Activated T-helper 2 cell treated with anti-CD3 and anti-CD28 coated beads, Interferon-gamma antibody, Interleukin-2, Interleukin-4, amounts not matched to agents 10 μg/mL and 5 μg/mL and 100 μg/mL, durations not matched to agents 14 hours and 24 hours and 36 hours (primary cell): ENCODE measurements at regions of chr7 and their contacts with region 1.

Region 1: GRCh38 chr7:140479062-140479738 is at the start of gene MKRN1:
- DNase-seq: peak; percentile 89
- H3K4me3 Mint-ChIP-seq: peak within 1 kb of the TSS; percentile 97
- H3K27ac Mint-ChIP-seq: peak within 1 kb of the TSS; percentile 96
- H3K4me1 Mint-ChIP-seq: peaks cover 25% of the 10 kb centered on the region
- H3K27me3 Mint-ChIP-seq: no peaks in the 10 kb centered on the region
- total RNA-seq, gene MKRN1: 72.9 and 73.6 TPM in 2 replicates

Region 2: DNA sequence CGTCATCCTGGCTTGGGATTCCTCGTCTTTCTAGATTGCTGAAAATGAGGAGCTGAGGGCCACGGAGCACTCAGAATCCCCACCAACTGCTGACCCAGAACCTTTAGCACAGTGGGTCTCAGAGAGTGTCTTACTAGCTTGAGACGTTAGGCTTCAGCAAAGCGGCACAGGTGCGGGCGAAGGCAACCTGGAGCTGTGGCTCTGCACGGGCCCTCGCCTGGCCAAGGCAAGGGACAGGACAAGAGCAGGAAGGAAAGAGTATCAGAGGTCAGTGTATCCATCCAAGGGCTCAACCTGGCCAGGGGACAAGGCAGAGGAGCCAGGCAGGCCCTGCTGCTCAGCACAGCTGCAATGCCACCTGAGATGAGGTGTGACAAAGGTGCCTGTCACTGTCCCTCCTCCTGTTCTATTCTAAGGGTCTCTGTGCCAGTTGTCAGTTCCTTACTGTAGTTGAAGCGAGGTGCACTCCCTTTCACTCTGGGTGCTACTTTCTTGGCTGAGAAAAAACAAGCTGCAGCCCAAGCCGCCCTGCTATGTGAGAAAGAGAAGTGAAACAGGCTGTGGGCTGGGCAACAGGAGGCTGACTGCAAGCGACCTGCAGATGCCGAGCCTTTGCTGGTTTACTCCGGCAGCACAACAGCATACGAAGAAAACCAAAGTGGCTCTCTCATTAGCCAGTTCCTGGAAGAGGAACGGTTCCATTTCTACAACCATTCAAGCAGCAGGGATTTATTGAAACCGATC is 269.2 kb before region 1 on chr7:
- intact Hi-C with region 1: loop called (anchors 5 kb)
- DNase-seq: peak; percentile 62
- H3K4me3 Mint-ChIP-seq: peak overlapping the region; percentile 49
- H3K27ac Mint-ChIP-seq: peak overlapping the region; percentile 70
- H3K4me1 Mint-ChIP-seq: peaks cover 61% of the 10 kb centered on the region
- H3K27me3 Mint-ChIP-seq: peaks cover 3% of the 10 kb centered on the region

Region 3: DNA sequence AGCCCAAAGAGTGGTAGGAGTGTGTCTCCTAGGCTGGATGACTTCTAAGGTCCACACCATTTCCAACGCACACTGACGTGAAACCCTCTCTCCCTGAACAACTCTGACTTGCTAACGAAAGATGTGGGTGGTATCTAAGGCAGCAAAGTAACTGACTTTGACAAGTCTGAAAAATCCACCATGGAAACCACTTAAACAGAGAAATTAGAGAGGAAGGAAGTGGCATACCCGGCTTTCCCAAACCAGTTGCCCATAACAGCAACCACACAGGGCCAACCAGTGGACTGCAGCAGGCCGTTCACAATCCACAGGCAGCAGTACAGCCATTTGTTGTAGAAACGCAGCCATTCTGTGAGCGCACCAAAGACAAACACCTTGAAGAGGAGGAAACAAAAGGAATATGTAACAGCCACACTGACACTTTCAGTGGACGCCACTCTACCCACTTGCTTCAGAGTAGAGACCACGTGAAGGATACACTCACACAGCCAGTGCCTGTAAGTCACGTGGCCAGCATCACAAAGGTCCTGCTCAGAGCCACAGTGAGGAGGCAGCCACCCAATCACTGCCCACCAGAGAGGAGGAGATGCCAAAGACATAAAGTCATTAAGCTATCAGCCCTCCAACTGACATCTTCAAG is 120.7 kb before region 1 on chr7:
- intact Hi-C with region 1: loop called (anchors 5 kb)
- DNase-seq: peak; percentile 16
- H3K4me3 Mint-ChIP-seq: peak overlapping the region; percentile 62
- H3K27ac Mint-ChIP-seq: peak overlapping the region; percentile 97
- H3K4me1 Mint-ChIP-seq: peaks cover 29% of the 10 kb centered on the region
- H3K27me3 Mint-ChIP-seq: no peaks in the 10 kb centered on the region

Region 4: GRCh38 chr7:140439359-140439758 is 39.8 kb before region 1 on chr7:
- intact Hi-C with region 1: loop called (anchors 5 kb)
- DNase-seq: no peak
- H3K4me3 Mint-ChIP-seq: no peak overlapping the region
- H3K27ac Mint-ChIP-seq: peak overlapping the region; percentile 58
- H3K4me1 Mint-ChIP-seq: peaks cover 9% of the 10 kb centered on the region
- H3K27me3 Mint-ChIP-seq: no peaks in the 10 kb centered on the region

Region 5: DNA sequence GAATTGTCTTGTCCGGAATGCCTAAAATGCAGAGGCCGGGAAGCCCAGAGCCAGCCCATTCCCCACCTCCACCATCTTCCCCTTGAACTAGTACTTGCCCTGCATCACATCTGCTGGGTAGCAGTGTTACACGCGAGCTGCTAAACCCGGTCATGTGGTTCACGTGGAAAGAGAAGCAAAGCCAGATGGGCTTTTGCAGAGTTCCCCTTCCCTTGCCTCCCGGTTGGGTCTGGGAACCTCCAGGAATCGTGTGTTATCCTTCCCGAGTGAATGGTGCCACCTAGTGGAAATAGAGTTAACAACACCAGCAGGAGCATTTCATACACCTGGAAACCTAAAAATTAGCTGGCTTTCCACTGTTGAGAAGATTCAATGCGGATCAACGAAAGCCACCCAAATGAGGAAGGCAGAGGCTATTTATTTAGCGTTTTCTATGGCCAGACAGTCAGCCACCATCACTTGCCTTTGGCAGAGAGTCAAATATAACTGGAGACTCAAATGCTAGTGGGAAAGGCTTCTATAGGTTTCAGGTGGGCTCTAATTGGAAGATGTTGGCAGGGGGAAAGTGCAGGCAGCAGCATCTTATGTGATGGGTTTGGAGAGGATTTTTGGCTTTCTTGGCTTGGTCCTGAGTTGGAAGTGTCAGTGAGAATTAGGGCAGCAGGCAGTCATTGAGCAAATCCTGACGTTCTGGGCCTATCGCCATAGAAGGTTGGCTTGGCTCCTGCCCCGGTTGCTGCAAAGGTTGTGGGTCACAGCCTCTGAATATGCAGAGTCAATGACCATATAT is 174.3 kb after region 1 on chr7:
- intact Hi-C with region 1: loop called (anchors 2 kb)
- DNase-seq: no peak
- H3K4me3 Mint-ChIP-seq: no peak overlapping the region
- H3K27ac Mint-ChIP-seq: no peak overlapping the region
- H3K4me1 Mint-ChIP-seq: peaks cover 20% of the 10 kb centered on the region
- H3K27me3 Mint-ChIP-seq: peaks cover 22% of the 10 kb centered on the region